ENCODE measurements at regions of chr13 and their contacts with region 1.

Region 1: DNA sequence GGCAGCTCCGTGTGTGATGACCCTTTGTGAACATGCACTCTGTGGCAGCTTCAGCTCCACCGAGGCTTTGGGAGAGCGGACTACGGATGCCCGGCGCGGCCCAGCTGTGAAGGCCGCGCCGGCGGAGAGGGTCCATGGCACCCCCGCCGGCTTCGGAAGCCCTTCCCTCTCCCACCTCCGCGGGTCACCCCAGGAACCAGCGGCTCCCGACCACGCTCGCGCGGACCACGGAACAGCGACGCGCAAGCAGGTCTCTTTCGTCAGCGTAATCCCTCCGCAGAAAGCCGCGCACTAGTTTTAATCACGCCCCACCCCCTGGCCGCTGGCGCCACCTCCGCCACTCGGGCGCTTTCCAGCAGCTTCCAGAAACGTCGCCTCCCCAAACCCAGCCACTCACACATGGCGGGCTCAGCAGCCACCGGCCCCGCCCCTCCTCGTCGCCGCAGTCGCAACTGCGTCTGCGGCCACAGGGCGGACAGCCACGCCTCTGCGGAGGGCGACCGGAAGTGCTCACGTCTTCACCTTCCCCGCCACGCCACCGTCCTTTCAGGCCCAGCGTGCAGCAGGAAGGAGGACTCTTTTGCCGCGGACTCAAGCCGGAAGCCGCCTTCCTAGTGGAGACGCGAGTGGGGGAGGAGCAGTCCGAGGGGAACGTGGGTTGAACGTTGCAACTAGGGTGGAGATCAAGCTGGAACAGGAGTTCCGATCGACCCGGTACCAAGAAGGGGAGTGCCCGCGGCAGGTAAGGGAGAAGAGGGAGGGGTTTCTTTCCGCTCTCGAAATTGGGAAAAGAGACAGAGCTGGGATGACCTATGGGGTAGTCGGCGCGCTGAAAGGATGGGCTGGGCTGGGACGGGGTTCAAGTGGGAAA is at the start of gene USPL1:
- DNase-seq: peak; percentile 94 to 99 (median 98)
- ATAC-seq: peak; percentile 90 to 91
- H3K4me3 Mint-ChIP-seq: no peak within 1 kb of the TSS
- H3K27ac Mint-ChIP-seq: no peak within 1 kb of the TSS
- H3K4me1 Mint-ChIP-seq: peaks cover 4 to 42% (median 29%) of the 10 kb centered on the region in 4 donors
- H3K27me3 Mint-ChIP-seq: no peaks in the 10 kb centered on the region
- polyA plus RNA-seq, gene USPL1: 13.4 to 17.6 (median 14.2) TPM

Region 2: DNA sequence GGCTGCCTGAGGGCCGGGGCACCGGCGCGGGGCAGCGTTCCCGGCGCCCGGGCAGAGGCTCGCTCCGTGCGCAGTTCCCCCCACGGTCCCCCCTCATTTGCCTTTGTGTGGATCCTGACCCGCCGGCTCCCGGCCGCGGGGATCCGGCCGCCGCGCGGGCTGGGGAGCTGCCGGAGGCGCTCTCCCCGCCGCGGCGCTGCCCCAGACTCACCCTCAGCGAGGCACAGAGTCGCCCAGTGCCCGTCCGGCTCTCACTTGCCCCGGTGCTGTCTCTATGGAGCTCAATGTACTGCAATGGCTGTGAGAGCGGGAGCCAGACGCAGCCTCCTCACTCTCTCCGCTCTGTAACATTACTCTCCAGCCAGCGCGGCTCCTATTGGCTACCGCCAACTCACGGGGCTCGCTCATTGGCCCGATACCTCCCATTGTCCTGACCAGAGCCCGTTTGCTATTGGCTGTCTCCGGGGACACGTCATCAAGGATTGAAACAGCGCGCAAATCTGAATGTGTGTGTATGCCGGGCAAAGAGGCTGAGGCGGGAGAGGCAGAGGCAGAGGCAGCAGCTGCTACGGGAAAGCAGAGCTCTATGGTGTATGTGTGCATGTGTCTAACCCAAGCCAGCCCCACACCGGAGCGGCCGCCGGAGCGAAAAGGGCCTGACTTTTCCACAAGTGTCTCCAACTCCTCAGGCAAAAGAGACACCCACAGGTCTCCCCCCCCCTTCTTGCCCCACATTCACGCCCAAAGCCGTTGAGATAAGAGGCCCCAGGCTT is 151.8 kb before region 1 on chr13 and contains the start of gene HMGB1:
- POLR2A ChIA-PET with region 1: interaction called, 82 read pairs
- DNase-seq: peak; percentile 86 to 99 (median 96)
- ATAC-seq: peak; percentile 87 to 88
- H3K4me3 Mint-ChIP-seq: peak within 1 kb of the TSS; percentile 88 to 99 (median 96)
- H3K27ac Mint-ChIP-seq: peak within 1 kb of the TSS; percentile 97 to 99 (median 98)
- H3K4me1 Mint-ChIP-seq: peaks cover 10 to 47% (median 24%) of the 10 kb centered on the region in 4 donors
- H3K27me3 Mint-ChIP-seq: peaks cover 0 to 13% (median 0%) of the 10 kb centered on the region in 5 donors
- polyA plus RNA-seq, gene HMGB1: 468 to 703 (median 554) TPM

Region 3: DNA sequence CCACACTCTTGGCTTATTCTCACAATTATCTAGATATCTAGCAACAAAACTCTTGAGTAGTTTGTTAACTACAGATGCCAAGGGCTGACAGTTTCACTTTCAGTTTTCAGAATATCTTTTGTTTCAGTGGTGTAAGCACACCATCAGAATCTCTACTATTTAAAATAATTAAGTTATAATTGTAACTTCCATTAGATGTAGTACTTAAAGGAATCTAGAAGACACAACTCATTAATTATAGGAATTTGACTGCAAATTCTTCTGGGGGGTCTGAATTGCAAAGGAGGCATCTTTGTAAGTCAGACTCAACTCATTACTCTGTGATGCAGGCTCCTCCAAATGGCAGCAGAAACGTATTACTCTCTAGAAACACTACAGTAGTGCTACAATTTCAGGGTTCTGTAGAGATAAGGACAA is 44.7 kb before region 1 on chr13:
- POLR2A ChIA-PET with region 1: interaction called, 28 read pairs
- DNase-seq: peak in 5 of 10 donors; percentile 33 to 70 (median 59)
- ATAC-seq: peak; percentile 76 to 86
- H3K4me3 Mint-ChIP-seq: peak overlapping the region; percentile 42 to 86 (median 81)
- H3K27ac Mint-ChIP-seq: peak overlapping the region; percentile 87 to 96 (median 93)
- H3K4me1 Mint-ChIP-seq: peaks cover 10 to 38% (median 29%) of the 10 kb centered on the region in 4 donors
- H3K27me3 Mint-ChIP-seq: no peaks in the 10 kb centered on the region

Region 4: DNA sequence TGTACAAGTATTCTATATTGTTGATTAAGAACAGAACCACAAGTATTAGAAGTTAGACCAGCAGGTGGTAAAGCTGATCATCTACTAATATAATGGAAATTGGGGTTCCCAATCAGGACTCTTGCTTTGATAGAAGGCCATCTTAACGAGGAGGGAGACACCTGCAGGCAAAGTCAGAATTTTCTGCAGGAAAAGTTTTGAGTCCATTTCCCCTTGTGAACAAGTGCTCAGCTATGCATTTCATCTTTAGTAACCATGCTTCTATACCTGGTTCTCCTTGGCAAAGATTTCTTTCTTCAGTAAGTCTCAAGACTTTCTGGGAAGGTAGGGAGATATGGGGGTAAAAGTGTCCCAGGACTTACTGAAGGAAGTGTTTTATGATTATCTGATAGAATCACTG is 36.0 kb before region 1 on chr13:
- POLR2A ChIA-PET with region 1: interaction called, 10 read pairs
- DNase-seq: peak in 1 of 10 donors; percentile 4
- ATAC-seq: no peak
- H3K4me3 Mint-ChIP-seq: no peak overlapping the region
- H3K27ac Mint-ChIP-seq: peak overlapping the region in 1 of 10 donors; percentile 42
- H3K4me1 Mint-ChIP-seq: peaks cover 14 to 15% (median 15%) of the 10 kb centered on the region in 4 donors
- H3K27me3 Mint-ChIP-seq: peaks cover 0 to 5% (median 1%) of the 10 kb centered on the region in 5 donors

Region 5: GRCh38 chr13:30763786-30764413 is 146.3 kb after region 1 on chr13:
- POLR2A ChIA-PET with region 1: no interaction called
- DNase-seq: no peak
- ATAC-seq: no peak
- H3K4me3 Mint-ChIP-seq: no peak overlapping the region
- H3K27ac Mint-ChIP-seq: no peak overlapping the region
- H3K4me1 Mint-ChIP-seq: peaks cover 4 to 14% (median 7%) of the 10 kb centered on the region in 4 donors
- H3K27me3 Mint-ChIP-seq: no peaks in the 10 kb centered on the region

Measured in naive thymus-derived CD8-positive, alpha-beta T cell (primary cell).